ENCODE measurements at regions of chr13 and their contacts with region 1.

Region 1: GRCh38 chr13:28373810-28374209 is 121.1 kb downstream of the FLT1 start:
- DNase-seq: no peak
- ATAC-seq: no peak
- H3K4me3 ChIP-seq: no peak overlapping the region
- H3K4me3 Mint-ChIP-seq: no peak overlapping the region
- H3K27ac ChIP-seq: no peak overlapping the region
- H3K27ac Mint-ChIP-seq: no peak overlapping the region
- H3K4me1 ChIP-seq: no peaks in the 10 kb centered on the region
- H3K4me1 Mint-ChIP-seq: no peaks in the 10 kb centered on the region
- H3K27me3 ChIP-seq: no peaks in the 10 kb centered on the region
- H3K27me3 Mint-ChIP-seq: no peaks in the 10 kb centered on the region
- CTCF ChIP-seq: no peak

Region 2: DNA sequence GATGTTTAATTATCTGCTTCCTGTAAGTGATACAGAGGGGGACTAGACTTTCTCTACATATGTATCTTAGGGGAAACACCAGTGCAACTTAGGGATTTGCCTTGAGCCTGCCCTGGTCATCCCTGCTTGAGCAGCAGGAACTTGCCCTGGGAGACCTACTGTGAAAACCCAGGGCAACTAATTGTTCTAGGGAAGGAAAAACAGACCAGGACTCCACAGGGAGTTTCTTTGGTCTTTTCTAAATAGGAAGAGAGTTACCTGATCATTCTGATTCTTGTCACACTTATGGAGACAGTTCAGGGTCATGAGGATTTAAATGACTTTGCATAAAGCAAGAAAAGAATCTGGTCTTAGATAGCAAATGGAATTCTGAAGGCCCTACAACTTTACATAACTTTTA is 1727.2 kb before region 1 on chr13:
- CTCF ChIA-PET with region 1: no interaction called
- POLR2A ChIA-PET with region 1: no interaction called
- intact Hi-C with region 1: loop called in 1 of 2 experiments (anchors 5 kb)
- DNase-seq: no peak
- ATAC-seq: no peak
- H3K4me3 ChIP-seq: no peak overlapping the region
- H3K4me3 Mint-ChIP-seq: no peak overlapping the region
- H3K27ac ChIP-seq: no peak overlapping the region
- H3K27ac Mint-ChIP-seq: no peak overlapping the region
- H3K4me1 ChIP-seq: no peaks in the 10 kb centered on the region
- H3K4me1 Mint-ChIP-seq: no peaks in the 10 kb centered on the region
- H3K27me3 ChIP-seq: no peaks in the 10 kb centered on the region
- H3K27me3 Mint-ChIP-seq: peaks cover 17% of the 10 kb centered on the region
- CTCF ChIP-seq: no peak